GM13977 (cell line): ENCODE measurements at regions of chr17 and their contacts with region 1.

Region 1: DNA sequence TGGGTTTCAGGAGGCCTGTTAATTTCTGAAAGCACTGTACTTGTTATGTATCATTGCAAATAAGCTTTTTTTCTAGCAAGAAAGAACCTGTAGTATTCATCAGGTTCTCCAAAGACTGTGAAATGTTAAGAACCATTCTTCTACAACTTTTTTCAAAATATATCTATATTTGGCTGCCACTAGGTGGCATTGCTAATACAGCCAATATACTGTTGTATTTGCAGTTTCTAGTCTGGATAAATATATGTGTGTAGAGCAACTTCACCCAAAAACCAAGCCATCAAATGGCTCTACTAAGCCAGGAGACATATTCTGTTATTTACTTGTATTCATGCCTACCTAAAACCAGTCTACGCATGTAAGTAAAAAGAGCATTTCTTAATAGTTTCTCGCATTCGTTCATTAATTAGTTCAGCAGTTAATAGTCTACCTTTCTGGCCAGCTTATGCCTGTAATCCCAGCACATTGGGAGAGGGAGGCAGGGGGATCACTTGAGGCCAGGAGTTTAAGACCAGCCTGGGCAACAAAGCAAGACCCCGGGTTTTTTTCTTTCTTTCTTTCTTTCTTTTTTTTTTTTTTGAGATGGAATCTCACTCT is 39.5 kb downstream of the VMP1 start:
- DNase-seq: peak; percentile 36
- CTCF ChIP-seq: peak; percentile 65

Region 2: DNA sequence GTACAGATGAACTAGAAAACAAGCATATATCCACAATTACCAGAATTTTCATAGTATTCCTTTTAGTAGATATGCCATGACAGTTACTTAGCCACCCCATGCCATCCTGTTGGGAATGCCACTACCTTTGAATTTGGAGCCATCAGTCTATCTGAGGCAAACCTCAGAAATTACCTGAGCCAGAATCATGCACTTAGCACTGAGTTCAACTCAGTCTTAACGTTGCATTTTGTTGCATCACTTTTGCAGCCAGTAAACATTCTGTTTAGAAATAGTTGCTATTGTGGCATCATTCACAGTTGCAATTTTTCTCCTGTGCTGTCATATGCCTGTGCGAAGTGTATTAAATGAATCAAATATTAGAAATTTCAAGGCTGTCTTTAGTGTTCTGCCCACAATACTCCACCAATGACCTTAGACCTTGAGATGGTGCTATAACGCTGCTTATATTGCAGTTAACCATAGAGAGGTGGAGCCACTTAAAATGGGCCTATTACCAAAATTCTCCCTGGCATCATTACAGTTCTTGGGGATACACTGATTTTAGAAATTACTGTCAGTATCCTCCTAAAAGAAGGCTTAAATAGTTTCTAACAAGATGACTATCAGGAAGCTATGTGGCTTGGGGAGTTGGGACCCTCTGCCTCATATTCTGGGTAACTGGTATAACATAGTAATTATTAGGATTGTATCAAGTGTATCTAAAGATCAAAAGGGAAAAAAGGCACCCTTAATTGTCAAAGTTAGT is 50.8 kb before region 1 on chr17:
- in situ Hi-C with region 1: no loop called
- DNase-seq: no peak
- CTCF ChIP-seq: no peak

Region 3: GRCh38 chr17:59859444-59860025 is 112.6 kb after region 1 on chr17:
- in situ Hi-C with region 1: loop called (anchors 10 kb)
- DNase-seq: peak; percentile 15
- CTCF ChIP-seq: peak; percentile 65

Region 4: DNA sequence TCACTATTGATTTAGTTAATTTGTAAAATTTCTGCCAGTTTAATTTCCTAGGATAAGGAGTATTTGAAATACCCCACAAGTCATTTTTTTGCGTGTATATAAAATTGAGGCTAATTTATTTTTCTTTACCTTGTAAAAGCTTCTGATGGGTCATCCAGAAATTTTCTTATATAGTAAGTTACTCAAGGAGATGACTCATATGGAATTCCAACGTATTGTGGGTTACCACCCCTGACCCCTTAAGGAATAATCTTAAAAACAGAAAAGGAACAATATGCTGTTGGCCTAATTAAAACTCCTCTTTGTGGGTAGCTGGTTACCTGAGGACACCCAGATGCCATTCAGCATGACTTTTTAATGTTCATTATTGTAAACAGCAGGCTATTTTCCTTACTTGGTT is 318.2 kb after region 1 on chr17:
- in situ Hi-C with region 1: loop called (anchors 25 kb)
- DNase-seq: no peak
- CTCF ChIP-seq: no peak